Psoas muscle (tissue), 8 donors: ENCODE measurements at regions of chr3 and their contacts with region 1.

Region 1: DNA sequence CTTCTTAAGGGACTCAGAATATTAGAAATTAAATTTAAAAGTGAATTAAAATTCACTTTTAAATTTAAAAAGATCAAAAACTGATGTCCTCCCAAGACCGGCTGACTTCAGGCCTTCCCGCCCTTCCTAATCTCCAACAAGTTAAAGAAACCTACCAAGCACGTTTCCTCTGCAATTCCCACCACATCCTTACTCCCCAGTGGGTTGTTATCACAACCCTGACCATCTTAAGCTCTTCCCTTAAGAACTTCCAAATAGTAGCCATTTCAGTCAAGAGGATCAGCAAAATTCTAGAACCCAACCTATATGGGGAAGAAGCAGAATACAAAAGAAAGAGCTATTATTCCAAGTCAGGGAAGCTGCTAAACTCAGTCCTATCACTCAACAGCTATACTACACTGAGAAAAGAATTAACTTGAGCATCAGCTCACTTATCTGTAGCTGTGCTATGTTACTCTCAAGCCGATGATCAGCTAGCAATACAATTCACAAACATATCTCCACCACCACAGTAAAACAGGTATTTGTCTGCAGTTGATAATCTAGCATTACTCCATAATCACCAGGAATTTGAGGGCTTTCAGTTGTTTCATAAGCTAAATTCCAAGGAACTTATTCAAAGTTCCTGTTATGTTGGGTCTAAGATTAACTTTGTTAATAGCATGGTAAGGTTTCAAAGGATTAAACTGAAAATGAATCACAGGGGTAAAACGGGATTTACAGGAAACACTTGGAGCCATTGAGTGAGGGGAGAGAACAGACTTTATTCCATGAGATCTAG is 14.3 kb downstream of the ABCC5 start:
- DNase-seq: no peak
- ATAC-seq: peak in 2 of 4 donors; percentile 43 to 59
- H3K4me3 ChIP-seq: peak overlapping the region; percentile 9
- H3K27ac ChIP-seq: peak overlapping the region; percentile 84
- H3K4me1 ChIP-seq: peaks cover 68% of the 10 kb centered on the region
- H3K27me3 ChIP-seq: no peaks in the 10 kb centered on the region
- CTCF ChIP-seq: no peak

Region 2: DNA sequence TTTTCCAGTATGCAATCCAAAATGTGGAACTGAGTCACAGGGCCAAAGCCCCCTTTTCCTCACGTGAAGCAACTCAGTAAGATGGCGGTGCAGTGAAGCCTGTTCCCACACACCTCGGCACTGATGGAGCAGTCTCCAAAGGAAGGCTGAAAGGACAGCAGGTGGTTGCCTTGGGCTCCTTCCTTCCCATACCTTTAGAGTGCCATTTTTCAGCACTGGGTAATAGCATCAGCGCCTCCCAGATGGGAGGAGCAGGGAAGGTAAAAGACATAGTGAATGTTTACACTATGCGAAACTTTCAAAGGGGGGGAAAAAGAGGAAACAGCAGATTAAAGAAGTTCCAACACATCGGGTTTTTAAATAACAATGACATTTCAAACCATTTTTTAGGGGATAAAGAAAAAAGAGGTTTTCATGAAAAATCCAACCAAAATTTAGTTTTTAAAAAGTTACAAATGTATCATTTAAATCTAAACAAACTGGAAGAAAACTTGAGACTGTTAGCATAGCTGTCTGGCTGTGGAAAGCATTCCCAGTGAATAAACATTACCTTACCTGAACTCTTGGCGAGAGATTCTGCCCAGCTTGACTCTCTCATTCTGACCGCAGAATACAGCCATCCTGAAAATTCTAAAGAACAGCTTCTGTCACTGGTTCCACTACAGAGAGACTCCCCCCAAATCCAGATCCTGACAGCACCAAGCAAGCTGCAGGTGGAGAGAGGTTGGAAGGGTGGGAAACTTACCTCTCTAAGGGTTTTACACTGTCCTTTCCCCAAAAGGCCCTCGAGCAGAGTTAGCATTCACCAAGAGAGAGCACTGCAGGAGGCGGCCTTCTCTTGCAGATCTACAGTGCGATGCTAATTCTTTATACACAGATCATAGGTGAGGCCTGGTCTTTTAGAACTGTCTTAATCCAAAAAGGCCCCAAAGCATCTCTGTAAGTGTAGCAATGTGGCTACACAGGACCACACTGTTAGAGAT is 18.3 kb before region 1 on chr3:
- intact Hi-C with region 1: loop called (anchors 2 kb)
- DNase-seq: no peak
- ATAC-seq: no peak
- H3K4me3 ChIP-seq: no peak overlapping the region
- H3K27ac ChIP-seq: peak overlapping the region; percentile 76
- H3K4me1 ChIP-seq: peaks cover 77% of the 10 kb centered on the region
- H3K27me3 ChIP-seq: no peaks in the 10 kb centered on the region
- CTCF ChIP-seq: no peak

Region 3: GRCh38 chr3:184110316-184110725 is 106.9 kb after region 1 on chr3:
- intact Hi-C with region 1: no loop called
- DNase-seq: no peak
- ATAC-seq: no peak
- H3K4me3 ChIP-seq: no peak overlapping the region
- H3K27ac ChIP-seq: no peak overlapping the region
- H3K4me1 ChIP-seq: no peaks in the 10 kb centered on the region
- H3K27me3 ChIP-seq: no peaks in the 10 kb centered on the region
- CTCF ChIP-seq: no peak